Breast epithelium (tissue), 4 donors: ENCODE measurements at regions of chr10 and their contacts with region 1.

Region 1: GRCh38 chr10:34584164-34584563 is 230.9 kb downstream of the PARD3 start:
- DNase-seq: no peak
- H3K4me3 ChIP-seq: no peak overlapping the region
- H3K27ac ChIP-seq: no peak overlapping the region
- H3K4me1 ChIP-seq: no peaks in the 10 kb centered on the region
- H3K27me3 ChIP-seq: no peaks in the 10 kb centered on the region
- CTCF ChIP-seq: no peak
- POLR2A ChIP-seq: no peak

Region 2: DNA sequence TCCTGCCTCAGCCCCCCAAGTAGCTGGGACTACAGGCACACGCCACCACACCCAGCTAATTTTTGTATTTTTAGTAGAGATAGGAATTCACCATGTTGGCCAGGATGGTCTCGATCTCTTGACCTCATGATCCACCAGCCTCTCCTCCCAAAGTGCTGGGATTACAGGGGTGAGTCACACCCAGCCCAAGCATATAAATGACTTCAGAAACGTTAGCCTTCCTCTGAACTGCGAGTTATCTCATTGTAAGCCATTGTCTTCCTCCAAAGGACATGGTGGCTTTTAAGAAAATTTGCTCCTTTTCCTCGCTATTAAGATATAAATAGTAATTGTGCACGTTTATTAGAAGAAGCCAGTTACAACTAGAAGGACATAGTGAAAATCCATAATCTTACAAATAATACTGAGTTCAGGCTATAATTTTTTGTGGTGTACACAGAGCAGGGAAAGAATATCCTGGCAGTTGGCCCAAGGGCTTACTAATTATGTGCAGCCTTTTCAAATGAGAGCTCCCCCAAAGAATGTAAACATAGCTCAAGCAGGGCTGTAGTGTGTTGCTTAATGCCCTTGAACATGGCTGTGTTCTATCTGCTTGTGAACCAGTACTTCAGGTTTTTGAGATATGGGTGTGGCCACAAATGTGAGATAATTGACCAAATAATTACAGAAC is 264.8 kb before region 1 on chr10:
- intact Hi-C with region 1: loop called (anchors 5 kb)
- DNase-seq: peak in 1 of 2 donors; percentile 28
- H3K4me3 ChIP-seq: no peak overlapping the region
- H3K27ac ChIP-seq: peak overlapping the region; percentile 17 to 21
- H3K4me1 ChIP-seq: no peaks in the 10 kb centered on the region
- H3K27me3 ChIP-seq: no peaks in the 10 kb centered on the region
- CTCF ChIP-seq: no peak
- POLR2A ChIP-seq: no peak